ENCODE measurements at regions of chr17 and their contacts with region 1.

Region 1: GRCh38 chr17:74923533-74924249 is 382 bp upstream of the OTOP2 start:
- DNase-seq: peak; percentile 62 to 89
- H3K4me3 ChIP-seq: peak overlapping the region; percentile 49
- H3K4me3 Mint-ChIP-seq: peak overlapping the region; percentile 71
- H3K27ac Mint-ChIP-seq: no peak overlapping the region
- H3K4me1 ChIP-seq: peaks cover 6% of the 10 kb centered on the region; the same call in 1 of the 2 replicates
- H3K4me1 Mint-ChIP-seq: no peaks in the 10 kb centered on the region
- H3K27me3 ChIP-seq: peaks cover 1% of the 10 kb centered on the region; the same call in 1 of the 2 replicates
- H3K27me3 Mint-ChIP-seq: peaks cover 25% of the 10 kb centered on the region
- CTCF ChIP-seq: peak; percentile 88 to 97

Region 2: GRCh38 chr17:74935585-74936469 is 12.1 kb after region 1 on chr17 and contains the start of gene OTOP3:
- CTCF ChIA-PET with region 1: interaction called, 10 read pairs
- POLR2A ChIA-PET with region 1: no interaction called
- intact Hi-C with region 1: no loop called
- DNase-seq: no peak
- H3K4me3 ChIP-seq: no peak within 1 kb of the TSS
- H3K4me3 Mint-ChIP-seq: no peak within 1 kb of the TSS
- H3K27ac Mint-ChIP-seq: no peak within 1 kb of the TSS
- H3K4me1 ChIP-seq: no peaks in the 10 kb centered on the region
- H3K4me1 Mint-ChIP-seq: peaks cover 12% of the 10 kb centered on the region
- H3K27me3 ChIP-seq: no peaks in the 10 kb centered on the region; the same call in 1 of the 2 replicates
- H3K27me3 Mint-ChIP-seq: peaks cover 16% of the 10 kb centered on the region
- CTCF ChIP-seq: no peak
- total RNA-seq, gene OTOP3: not detected in 2 replicates

Region 3: DNA sequence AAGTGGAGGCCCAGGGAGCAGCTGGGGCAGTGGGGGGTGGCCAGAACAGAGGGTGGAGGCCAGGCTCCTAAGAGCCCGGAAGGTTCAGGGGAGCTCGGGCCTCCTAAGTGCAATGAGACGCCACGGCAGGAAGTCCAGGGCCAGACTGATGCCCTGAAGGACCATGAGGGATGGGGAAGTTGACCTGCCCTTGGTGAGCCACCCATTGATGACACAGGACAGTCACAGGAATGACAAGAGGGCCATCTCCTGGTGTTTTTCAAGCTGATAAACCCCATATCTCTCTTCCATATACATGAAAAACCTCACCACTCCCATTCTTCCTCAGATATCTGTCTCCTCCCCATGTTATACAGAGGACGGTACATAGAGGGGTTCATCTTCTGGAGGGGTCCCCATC is 83.0 kb after region 1 on chr17:
- CTCF ChIA-PET with region 1: interaction called, 10 read pairs
- POLR2A ChIA-PET with region 1: no interaction called
- intact Hi-C with region 1: loop called (anchors 1 kb)
- DNase-seq: peak in 1 of 2 experiments; percentile 46
- H3K4me3 ChIP-seq: no peak overlapping the region
- H3K4me3 Mint-ChIP-seq: no peak overlapping the region
- H3K27ac Mint-ChIP-seq: no peak overlapping the region
- H3K4me1 ChIP-seq: peaks cover 3% of the 10 kb centered on the region; the same call in 1 of the 2 replicates
- H3K4me1 Mint-ChIP-seq: no peaks in the 10 kb centered on the region
- H3K27me3 ChIP-seq: no peaks in the 10 kb centered on the region
- H3K27me3 Mint-ChIP-seq: no peaks in the 10 kb centered on the region
- CTCF ChIP-seq: peak in 1 of 2 experiments; percentile 33

Region 4: GRCh38 chr17:75012346-75013091 is 88.8 kb after region 1 on chr17 and contains the start of gene MRPL58:
- CTCF ChIA-PET with region 1: interaction called, 10 read pairs
- POLR2A ChIA-PET with region 1: interaction called, 3 read pairs
- intact Hi-C with region 1: no loop called
- DNase-seq: peak; percentile 88 to 92
- H3K4me3 ChIP-seq: peak within 1 kb of the TSS; percentile 84
- H3K4me3 Mint-ChIP-seq: peak within 1 kb of the TSS; percentile 82
- H3K27ac Mint-ChIP-seq: peak within 1 kb of the TSS; percentile 84
- H3K4me1 ChIP-seq: peaks cover 3% of the 10 kb centered on the region; the same call in 1 of the 2 replicates
- H3K4me1 Mint-ChIP-seq: peaks cover 29% of the 10 kb centered on the region
- H3K27me3 ChIP-seq: no peaks in the 10 kb centered on the region
- H3K27me3 Mint-ChIP-seq: no peaks in the 10 kb centered on the region
- CTCF ChIP-seq: peak; percentile 68 to 79
- total RNA-seq, gene MRPL58: 61.0 and 61.8 TPM in 2 replicates

Region 5: GRCh38 chr17:75059369-75060345 is 136.0 kb after region 1 on chr17:
- CTCF ChIA-PET with region 1: no interaction called
- POLR2A ChIA-PET with region 1: no interaction called
- intact Hi-C with region 1: no loop called
- DNase-seq: peak in 1 of 2 experiments; percentile 49
- H3K4me3 ChIP-seq: no peak overlapping the region
- H3K4me3 Mint-ChIP-seq: no peak overlapping the region
- H3K27ac Mint-ChIP-seq: no peak overlapping the region
- H3K4me1 ChIP-seq: peaks cover 13% of the 10 kb centered on the region; the same call in 1 of the 2 replicates
- H3K4me1 Mint-ChIP-seq: peaks cover 9% of the 10 kb centered on the region
- H3K27me3 ChIP-seq: no peaks in the 10 kb centered on the region
- H3K27me3 Mint-ChIP-seq: no peaks in the 10 kb centered on the region
- CTCF ChIP-seq: peak; percentile 49 to 53